CD4-positive, alpha-beta memory T cell (primary cell): ENCODE measurements at regions of chr7 and their contacts with region 1.

Region 1: DNA sequence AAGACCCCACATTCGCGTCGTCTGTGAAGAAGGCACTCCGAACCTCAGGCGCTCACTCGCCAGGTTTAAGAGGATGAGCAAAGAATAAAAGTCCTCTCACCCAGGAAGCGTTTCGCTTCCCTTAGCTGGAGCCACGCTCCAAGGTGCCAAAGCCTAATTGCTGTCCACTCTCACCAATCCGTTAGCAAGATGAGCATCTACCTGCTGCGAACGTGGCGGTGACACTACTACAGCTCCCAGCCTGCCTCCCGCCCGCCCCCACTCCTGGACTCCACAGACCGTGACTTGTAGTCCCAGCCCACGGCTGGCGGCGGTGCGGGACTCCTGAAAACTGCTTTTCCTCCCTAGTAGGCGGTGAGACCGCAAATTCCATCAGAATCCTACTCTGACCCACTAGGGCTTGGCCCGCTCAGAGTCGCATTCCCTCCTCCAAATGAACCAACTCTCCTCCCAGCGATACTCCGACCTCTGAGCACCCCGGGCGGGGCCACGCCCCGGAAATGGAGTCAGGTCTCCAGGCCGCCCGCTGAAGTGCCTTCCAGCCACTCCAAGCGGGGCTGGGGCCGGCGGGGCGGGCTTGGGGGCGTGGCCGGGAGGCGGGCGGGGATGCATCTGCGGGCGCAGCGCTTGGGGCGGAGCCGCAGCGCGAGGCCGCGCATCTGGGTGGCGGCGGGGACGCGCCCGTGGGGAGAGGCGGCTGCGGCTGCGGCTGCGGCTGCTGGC is 521 bp upstream of the PTPN12 start:
- DNase-seq: peak; percentile 93 to 96 (median 94)
- H3K4me3 ChIP-seq: peak overlapping the region; percentile 76 to 95
- H3K4me3 Mint-ChIP-seq: peak overlapping the region; percentile 93 to 98 (median 98)
- H3K27ac ChIP-seq: peak overlapping the region; percentile 77
- H3K27ac Mint-ChIP-seq: peak overlapping the region; percentile 94 to 98 (median 96)
- H3K4me1 ChIP-seq: peaks cover 7% of the 10 kb centered on the region
- H3K4me1 Mint-ChIP-seq: peaks cover 6 to 28% (median 16%) of the 10 kb centered on the region in 4 donors
- H3K27me3 ChIP-seq: no peaks in the 10 kb centered on the region
- H3K27me3 Mint-ChIP-seq: no peaks in the 10 kb centered on the region

Region 2: DNA sequence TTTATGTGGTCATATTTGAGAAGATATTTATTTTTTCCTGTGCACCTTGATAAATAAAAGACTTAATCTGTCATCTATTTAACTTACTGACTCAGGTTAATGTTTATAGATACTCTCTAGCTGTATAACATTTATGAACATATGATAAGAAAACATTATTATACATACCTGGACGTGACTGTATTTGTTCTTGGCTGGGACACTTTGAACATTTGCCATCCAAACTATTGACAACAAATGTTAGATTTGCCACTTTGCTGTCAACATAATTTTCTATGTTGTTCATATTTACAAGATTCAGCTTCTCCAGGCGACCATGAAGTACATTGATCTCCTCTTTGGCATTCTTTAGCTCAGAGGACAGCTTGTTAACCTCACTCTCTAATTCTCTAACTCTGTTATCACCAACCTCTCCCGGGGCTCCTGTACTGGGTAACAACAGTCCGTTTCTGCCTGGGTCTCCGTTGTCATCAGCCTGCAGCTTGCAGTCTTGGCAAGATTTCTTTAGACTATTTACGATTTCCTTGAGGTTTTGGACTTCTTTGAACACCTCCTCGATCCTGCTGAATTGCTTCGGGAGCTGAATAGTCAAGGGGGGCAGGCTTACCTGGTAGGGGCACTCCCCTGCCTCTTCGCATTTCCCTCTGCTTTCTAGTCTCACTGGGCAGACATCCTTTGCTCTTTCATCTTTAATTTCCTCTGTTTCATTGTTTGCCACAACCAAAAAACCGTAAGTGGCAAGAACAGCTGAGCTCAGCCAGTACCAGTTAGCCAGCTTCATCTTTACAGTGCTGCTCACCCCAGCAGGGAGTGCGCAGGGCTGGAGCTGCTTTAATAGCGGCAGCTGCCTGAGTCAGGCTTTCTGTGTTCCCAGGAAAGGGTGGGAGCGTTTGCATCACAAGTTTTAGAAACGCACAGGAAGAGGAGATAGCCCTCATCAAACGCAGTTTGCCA is 337.3 kb before region 1 on chr7 and contains the start of gene FGL2:
- CTCF ChIA-PET with region 1: no interaction called
- POLR2A ChIA-PET with region 1: no interaction called
- intact Hi-C with region 1: loop called (anchors 5 kb)
- DNase-seq: peak; percentile 37 to 49 (median 43)
- H3K4me3 ChIP-seq: peak within 1 kb of the TSS; percentile 51 to 67
- H3K4me3 Mint-ChIP-seq: peak within 1 kb of the TSS; percentile 82 to 93 (median 88)
- H3K27ac ChIP-seq: peak within 1 kb of the TSS; percentile 56
- H3K27ac Mint-ChIP-seq: peak within 1 kb of the TSS; percentile 60 to 96 (median 91)
- H3K4me1 ChIP-seq: peaks cover 52% of the 10 kb centered on the region
- H3K4me1 Mint-ChIP-seq: peaks cover 27 to 42% (median 34%) of the 10 kb centered on the region in 4 donors
- H3K27me3 ChIP-seq: no peaks in the 10 kb centered on the region
- H3K27me3 Mint-ChIP-seq: no peaks in the 10 kb centered on the region
- total RNA-seq, gene FGL2: 2.9 to 4.5 TPM